Caco-2 (cell line): ENCODE measurements at regions of chr10 and their contacts with region 1.

Region 1: DNA sequence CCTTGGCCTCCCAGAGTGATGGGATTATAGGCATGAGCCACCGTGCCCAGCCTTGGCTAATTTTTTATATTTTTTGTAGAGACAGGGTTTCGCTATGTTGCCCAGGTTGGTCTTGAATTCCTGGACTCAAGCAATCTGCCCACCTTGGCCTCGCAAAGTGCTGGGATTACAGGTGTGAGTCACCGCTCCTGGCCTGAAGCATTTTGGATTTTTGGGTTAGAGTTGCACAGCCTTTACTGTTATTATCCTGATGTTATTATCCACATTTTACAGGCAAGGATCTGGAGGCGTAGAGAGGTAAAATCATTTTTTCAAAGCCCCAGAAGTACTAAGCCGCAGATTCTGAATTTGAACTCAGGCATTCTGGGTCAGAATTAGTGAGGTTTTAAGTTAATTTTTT is 75.4 kb downstream of the TCF7L2 start:
- DNase-seq: no peak
- H3K4me3 ChIP-seq: no peak overlapping the region
- H3K4me3 Mint-ChIP-seq: no peak overlapping the region
- H3K27ac Mint-ChIP-seq: no peak overlapping the region
- H3K4me1 ChIP-seq: peaks cover 36% of the 10 kb centered on the region
- H3K4me1 Mint-ChIP-seq: peaks cover 43% of the 10 kb centered on the region
- H3K27me3 ChIP-seq: no peaks in the 10 kb centered on the region
- H3K27me3 Mint-ChIP-seq: no peaks in the 10 kb centered on the region
- CTCF ChIP-seq: no peak

Region 2: DNA sequence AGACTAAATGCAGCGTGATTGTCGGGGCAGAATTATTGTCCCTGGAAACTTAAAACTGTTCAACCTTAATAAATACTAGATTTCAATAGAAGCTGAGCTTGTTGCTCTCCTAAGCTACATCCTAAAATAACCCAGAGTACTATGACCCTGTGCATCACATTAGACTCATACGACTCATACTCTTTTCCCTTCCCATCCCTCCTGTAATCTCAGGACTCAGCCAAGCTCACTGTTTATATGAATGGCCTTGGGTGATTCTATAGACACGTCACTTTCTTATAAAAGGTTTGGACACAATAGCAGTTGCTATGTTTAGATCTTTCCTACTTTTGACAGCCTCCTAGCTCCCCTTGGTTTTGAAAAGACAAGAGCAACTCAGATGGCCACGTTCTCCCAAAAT is 58.3 kb before region 1 on chr10:
- CTCF ChIA-PET with region 1: no interaction called
- POLR2A ChIA-PET with region 1: no interaction called
- intact Hi-C with region 1: no loop called
- DNase-seq: no peak
- H3K4me3 ChIP-seq: no peak overlapping the region
- H3K4me3 Mint-ChIP-seq: no peak overlapping the region
- H3K27ac Mint-ChIP-seq: no peak overlapping the region
- H3K4me1 ChIP-seq: peaks cover 49% of the 10 kb centered on the region
- H3K4me1 Mint-ChIP-seq: peaks cover 56% of the 10 kb centered on the region
- H3K27me3 ChIP-seq: no peaks in the 10 kb centered on the region
- H3K27me3 Mint-ChIP-seq: no peaks in the 10 kb centered on the region
- CTCF ChIP-seq: no peak

Region 3: GRCh38 chr10:113087165-113088029 is 61.9 kb after region 1 on chr10:
- CTCF ChIA-PET with region 1: no interaction called
- POLR2A ChIA-PET with region 1: interaction called, 11 read pairs
- intact Hi-C with region 1: no loop called
- DNase-seq: peak; percentile 81 to 87
- H3K4me3 ChIP-seq: no peak overlapping the region
- H3K4me3 Mint-ChIP-seq: peak overlapping the region; percentile 28
- H3K27ac Mint-ChIP-seq: peak overlapping the region; percentile 81
- H3K4me1 ChIP-seq: peaks cover 31% of the 10 kb centered on the region
- H3K4me1 Mint-ChIP-seq: peaks cover 33% of the 10 kb centered on the region
- H3K27me3 ChIP-seq: no peaks in the 10 kb centered on the region
- H3K27me3 Mint-ChIP-seq: no peaks in the 10 kb centered on the region
- CTCF ChIP-seq: no peak